ENCODE measurements at regions of chr2 and their contacts with region 1.

Region 1: DNA sequence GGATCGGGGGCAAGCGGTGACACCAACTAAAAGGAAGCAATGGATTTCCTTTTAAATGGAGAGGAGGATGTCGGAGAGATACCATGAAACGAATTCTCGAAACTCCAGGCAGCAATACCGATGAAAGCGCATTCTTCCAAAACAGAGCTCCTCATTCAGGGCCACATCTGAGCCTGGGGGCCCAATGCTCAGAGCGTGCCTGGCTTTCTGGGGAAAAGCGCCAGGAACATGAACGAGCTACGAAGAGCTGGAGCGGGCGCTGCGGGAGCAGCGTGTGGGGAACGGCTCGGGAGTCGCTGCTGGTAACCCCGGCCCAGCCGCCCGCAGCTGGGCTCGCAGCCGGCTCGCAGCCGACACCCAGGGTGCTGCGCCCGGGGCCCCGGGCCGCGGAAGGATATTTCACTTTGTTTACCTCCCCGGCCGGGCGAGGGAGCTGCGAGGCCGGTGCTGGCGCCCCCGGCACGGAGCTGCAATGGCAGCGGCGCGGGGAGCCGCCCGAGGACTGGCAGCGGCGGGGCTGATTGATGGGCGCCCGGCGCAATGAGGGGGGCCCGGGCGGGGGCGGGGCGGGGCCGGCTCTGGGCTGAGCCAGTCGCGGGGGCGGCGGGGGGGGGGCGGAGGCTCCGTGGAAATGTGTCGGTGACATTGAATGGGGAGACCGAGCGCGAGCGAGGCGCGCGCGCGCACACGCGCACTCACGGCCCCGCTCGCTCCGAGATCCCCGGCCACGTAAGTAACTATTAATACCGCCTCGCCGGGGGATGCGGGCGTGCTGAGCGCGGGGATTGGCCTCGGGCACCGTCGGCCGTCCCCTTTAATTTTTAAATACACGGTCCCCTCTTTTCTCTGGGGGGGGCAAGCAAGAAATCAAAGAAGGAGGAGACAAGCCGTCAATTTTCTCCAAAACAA is at the start of gene TRIB2:
- DNase-seq: peak; percentile 58 to 92 (median 85)

Region 2: GRCh38 chr2:11863513-11864328 is 852.8 kb before region 1 on chr2:
- intact Hi-C with region 1: loop called (anchors 10 kb)
- DNase-seq: peak; percentile 68 to 93 (median 83)

Region 3: GRCh38 chr2:12169721-12170120 is 546.8 kb before region 1 on chr2:
- intact Hi-C with region 1: loop called (anchors 5 kb)
- DNase-seq: peak in 12 of 42 donors; percentile 15 to 52 (median 34)

Region 4: DNA sequence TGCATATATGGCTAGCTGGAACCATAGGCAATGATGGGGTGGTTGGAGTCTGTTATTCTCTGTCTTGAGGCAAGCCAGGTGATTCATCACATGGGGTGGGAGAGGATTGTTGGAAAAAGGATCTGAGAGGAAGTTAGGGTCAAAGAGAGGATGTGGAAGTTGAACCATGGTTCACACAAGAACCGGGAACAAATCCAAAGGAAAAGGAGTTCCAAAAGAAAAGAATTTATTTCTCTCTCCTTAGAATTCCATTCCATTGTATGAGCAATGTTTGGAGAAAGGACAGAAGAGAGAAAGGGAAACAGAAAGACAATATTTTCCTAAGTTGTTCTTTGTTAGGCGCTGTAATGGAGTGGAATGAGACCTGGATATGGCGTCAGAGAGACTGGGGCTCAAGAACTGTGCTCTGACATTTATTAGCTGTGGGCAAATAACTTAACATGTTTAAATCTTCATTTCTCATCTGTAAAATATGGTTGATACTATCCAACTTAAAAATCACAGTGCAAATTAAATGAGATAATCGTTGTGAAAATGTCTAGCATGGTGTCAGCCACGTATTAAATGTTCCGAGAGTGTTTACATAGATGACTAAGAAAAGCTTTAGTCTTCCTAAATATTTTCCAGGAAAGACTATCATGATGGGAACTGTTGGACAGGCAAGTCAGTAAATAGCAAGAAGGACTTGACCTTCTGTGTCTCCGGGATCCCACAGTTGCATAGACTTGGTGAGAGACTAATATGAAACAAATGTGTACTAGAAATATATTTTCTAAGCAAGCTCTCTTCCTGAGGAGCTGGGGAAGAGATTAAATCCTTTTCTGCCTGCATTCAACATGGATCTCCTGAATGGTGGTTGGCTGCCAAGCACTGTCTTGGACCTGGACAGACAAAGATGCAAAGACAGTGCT is 71.6 kb after region 1 on chr2:
- intact Hi-C with region 1: no loop called
- DNase-seq: no peak